BJ (cell line): ENCODE measurements at regions of chr2 and their contacts with region 1.

Region 1: GRCh38 chr2:133561045-133561852 is 7.0 kb downstream of the NCKAP5 start:
- DNase-seq: no peak
- H3K4me3 ChIP-seq: no peak overlapping the region
- H3K27me3 ChIP-seq: no peaks in the 10 kb centered on the region
- CTCF ChIP-seq: peak; percentile 70

Region 2: GRCh38 chr2:133266041-133266925 is 295.0 kb before region 1 on chr2:
- CTCF ChIA-PET with region 1: interaction called, 37 read pairs
- POLR2A ChIA-PET with region 1: interaction called, 12 read pairs
- DNase-seq: no peak
- H3K4me3 ChIP-seq: peak overlapping the region; percentile 53
- H3K27me3 ChIP-seq: no peaks in the 10 kb centered on the region
- CTCF ChIP-seq: peak; percentile 34; the same call in 1 of the 2 replicates

Region 3: DNA sequence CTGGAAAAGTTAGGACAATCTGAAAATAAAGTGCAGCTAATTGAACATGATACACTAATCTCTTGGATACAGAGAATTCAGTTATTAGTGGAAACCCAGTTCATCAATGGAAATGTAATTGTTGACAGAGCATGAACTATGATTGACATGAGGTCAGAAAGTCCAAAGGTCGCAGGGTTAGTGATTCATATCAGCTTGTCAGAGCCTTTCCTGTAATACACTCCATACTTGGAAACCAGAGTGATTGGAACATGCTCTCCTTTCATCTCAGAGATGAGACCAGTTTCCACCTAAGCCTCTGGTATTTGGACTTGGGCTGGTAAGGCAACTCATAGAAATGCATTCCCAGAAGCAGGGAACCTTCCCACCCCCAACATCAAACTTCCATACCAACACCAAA is 15.5 kb after region 1 on chr2:
- CTCF ChIA-PET with region 1: interaction called, 11 read pairs
- POLR2A ChIA-PET with region 1: no interaction called
- DNase-seq: no peak
- H3K4me3 ChIP-seq: no peak overlapping the region
- H3K27me3 ChIP-seq: no peaks in the 10 kb centered on the region
- CTCF ChIP-seq: no peak

Region 4: DNA sequence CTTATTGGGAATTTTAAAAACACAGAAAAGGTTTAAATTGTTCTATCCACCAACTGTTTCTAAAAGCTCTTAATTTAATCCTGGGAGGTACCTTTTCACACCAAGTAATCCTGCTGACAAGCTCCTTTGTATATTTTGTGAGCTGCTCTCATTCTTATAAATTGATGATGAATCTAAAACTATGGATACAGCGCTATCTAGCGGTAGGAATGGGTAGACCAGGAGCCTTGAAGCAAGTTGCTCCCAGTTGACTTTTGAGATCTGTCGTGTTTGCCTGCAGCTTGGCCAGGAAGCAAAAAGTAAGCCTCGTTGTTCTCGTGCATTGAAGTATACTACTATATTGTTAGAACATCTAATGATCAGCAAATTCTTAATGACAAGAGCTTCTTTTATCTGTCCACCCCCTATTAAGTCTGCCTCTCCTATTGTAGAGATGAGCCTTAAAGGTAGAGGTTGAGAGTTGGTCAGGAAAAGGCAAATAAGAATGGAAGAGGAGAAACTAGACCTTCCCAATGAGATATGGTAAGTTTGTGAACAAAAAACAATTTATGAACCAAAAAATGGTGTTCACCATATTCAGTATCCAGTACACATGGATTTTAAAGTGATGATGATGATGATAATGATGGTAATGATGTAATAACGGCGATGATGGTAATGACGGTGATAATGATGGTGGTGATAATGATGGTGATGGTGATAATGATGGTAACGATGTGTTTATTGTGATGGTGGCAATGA is 219.0 kb after region 1 on chr2:
- CTCF ChIA-PET with region 1: interaction called, 20 read pairs
- POLR2A ChIA-PET with region 1: no interaction called
- DNase-seq: no peak
- H3K4me3 ChIP-seq: no peak overlapping the region
- H3K27me3 ChIP-seq: no peaks in the 10 kb centered on the region
- CTCF ChIP-seq: peak; percentile 82